ENCODE measurements at regions of chr10 and their contacts with region 1.

Region 1: GRCh38 chr10:119872860-119873681 is 428 bp upstream of the MCMBP start:
- DNase-seq: peak; percentile 96
- ATAC-seq: peak; percentile 92
- H3K4me3 ChIP-seq: peak overlapping the region; percentile 71 to 90 (median 89)
- H3K4me3 Mint-ChIP-seq: peak overlapping the region; percentile 91
- H3K27ac ChIP-seq: peak overlapping the region; percentile 83
- H3K27ac Mint-ChIP-seq: peak overlapping the region; percentile 86
- H3K4me1 ChIP-seq: peaks cover 22 to 23% of the 10 kb centered on the region in 2 donors
- H3K4me1 Mint-ChIP-seq: peaks cover 33% of the 10 kb centered on the region
- H3K27me3 ChIP-seq: no peaks in the 10 kb centered on the region
- H3K27me3 Mint-ChIP-seq: no peaks in the 10 kb centered on the region
- CTCF ChIP-seq: no peak

Region 2: GRCh38 chr10:119103903-119104652 is 769.0 kb before region 1 on chr10 and contains the start of gene DENND10:
- CTCF ChIA-PET with region 1: no interaction called
- POLR2A ChIA-PET with region 1: no interaction called
- intact Hi-C with region 1: loop called (anchors 2 kb)
- DNase-seq: peak; percentile 86
- ATAC-seq: peak; percentile 89
- H3K4me3 ChIP-seq: peak within 1 kb of the TSS; percentile 38 to 77 (median 68)
- H3K4me3 Mint-ChIP-seq: peak within 1 kb of the TSS; percentile 84
- H3K27ac ChIP-seq: peak within 1 kb of the TSS; percentile 2 to 4
- H3K27ac Mint-ChIP-seq: peak within 1 kb of the TSS; percentile 71
- H3K4me1 ChIP-seq: peaks cover 6 to 12% of the 10 kb centered on the region in 2 donors
- H3K4me1 Mint-ChIP-seq: peaks cover 10% of the 10 kb centered on the region
- H3K27me3 ChIP-seq: no peaks in the 10 kb centered on the region
- H3K27me3 Mint-ChIP-seq: no peaks in the 10 kb centered on the region
- CTCF ChIP-seq: no peak
- total RNA-seq, gene DENND10: 24.4 and 30.0 TPM in 2 replicates

Region 3: DNA sequence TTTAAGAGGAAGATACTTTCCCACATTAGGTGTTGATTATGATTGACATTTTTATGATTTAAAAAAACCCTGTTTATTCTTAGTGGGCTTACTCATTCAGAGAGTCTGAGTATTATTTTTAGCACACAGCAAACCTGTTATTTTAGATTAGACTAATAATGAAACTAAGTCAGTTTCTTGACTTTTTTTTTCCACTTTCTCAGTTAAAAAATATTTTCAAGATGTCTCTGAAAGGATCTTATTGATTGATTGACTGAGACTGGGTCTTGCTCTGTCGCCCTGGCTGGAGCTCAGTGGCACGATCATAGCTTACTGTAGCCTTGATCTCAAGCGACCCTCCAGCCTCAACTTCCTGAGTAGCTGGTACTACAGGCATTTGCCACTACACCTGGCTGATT is 167.6 kb before region 1 on chr10:
- CTCF ChIA-PET with region 1: no interaction called
- POLR2A ChIA-PET with region 1: no interaction called
- intact Hi-C with region 1: loop called (anchors 5 kb)
- DNase-seq: peak; percentile 62
- ATAC-seq: peak; percentile 13
- H3K4me3 ChIP-seq: peak overlapping the region in 3 of 5 experiments; percentile 18 to 46 (median 42)
- H3K4me3 Mint-ChIP-seq: peak overlapping the region; percentile 90
- H3K27ac ChIP-seq: peak overlapping the region; percentile 94
- H3K27ac Mint-ChIP-seq: peak overlapping the region; percentile 98
- H3K4me1 ChIP-seq: peaks cover 93 to 97% of the 10 kb centered on the region in 2 donors
- H3K4me1 Mint-ChIP-seq: peaks cover 81% of the 10 kb centered on the region
- H3K27me3 ChIP-seq: no peaks in the 10 kb centered on the region
- H3K27me3 Mint-ChIP-seq: no peaks in the 10 kb centered on the region
- CTCF ChIP-seq: no peak

Region 4: GRCh38 chr10:119859420-119860258 is 13.4 kb before region 1 on chr10:
- CTCF ChIA-PET with region 1: interaction called, 55 read pairs
- POLR2A ChIA-PET with region 1: interaction called, 11 read pairs
- intact Hi-C with region 1: no loop called
- DNase-seq: peak; percentile 71
- ATAC-seq: peak; percentile 58
- H3K4me3 ChIP-seq: no peak overlapping the region
- H3K4me3 Mint-ChIP-seq: no peak overlapping the region
- H3K27ac ChIP-seq: peak overlapping the region in 1 of 2 donors; percentile 47
- H3K27ac Mint-ChIP-seq: no peak overlapping the region
- H3K4me1 ChIP-seq: peaks cover 3 to 7% of the 10 kb centered on the region in 2 donors
- H3K4me1 Mint-ChIP-seq: peaks cover 26% of the 10 kb centered on the region
- H3K27me3 ChIP-seq: no peaks in the 10 kb centered on the region
- H3K27me3 Mint-ChIP-seq: no peaks in the 10 kb centered on the region
- CTCF ChIP-seq: peak; percentile 83

Region 5: GRCh38 chr10:119919826-119920225 is 46.8 kb after region 1 on chr10:
- CTCF ChIA-PET with region 1: interaction called, 3 read pairs
- POLR2A ChIA-PET with region 1: no interaction called
- intact Hi-C with region 1: loop called (anchors 1 kb)
- DNase-seq: peak; percentile 58
- ATAC-seq: peak; percentile 61
- H3K4me3 ChIP-seq: peak overlapping the region in 1 of 5 experiments; percentile 13
- H3K4me3 Mint-ChIP-seq: peak overlapping the region; percentile 70
- H3K27ac ChIP-seq: peak overlapping the region; percentile 47 to 87
- H3K27ac Mint-ChIP-seq: peak overlapping the region; percentile 87
- H3K4me1 ChIP-seq: peaks cover 6 to 20% of the 10 kb centered on the region in 2 donors
- H3K4me1 Mint-ChIP-seq: peaks cover 19% of the 10 kb centered on the region
- H3K27me3 ChIP-seq: no peaks in the 10 kb centered on the region
- H3K27me3 Mint-ChIP-seq: no peaks in the 10 kb centered on the region
- CTCF ChIP-seq: no peak